Ascending aorta (tissue), 2 donors: ENCODE measurements at regions of chr1 and their contacts with region 1.

Region 1: DNA sequence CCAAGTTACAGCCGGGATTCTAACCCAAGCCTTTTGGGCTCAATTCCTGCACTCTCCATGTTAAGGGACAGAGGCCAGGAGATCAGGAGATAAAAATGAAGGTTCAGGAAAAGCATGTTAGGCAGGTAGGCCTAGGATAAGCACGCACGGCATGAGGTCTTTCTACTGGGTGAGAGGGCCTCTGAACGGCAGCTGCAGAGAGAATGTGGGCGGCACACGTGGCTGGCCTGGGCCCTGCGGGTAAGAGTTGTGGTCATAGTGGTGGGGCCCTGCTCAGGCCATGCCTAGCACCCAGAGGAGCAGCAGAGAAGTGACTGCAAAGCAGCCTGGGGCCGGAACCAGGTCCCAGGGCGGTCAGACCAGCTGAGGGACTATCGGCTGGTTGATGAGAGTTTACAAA is 7.5 kb upstream of the FOXO6 start:
- DNase-seq: peak in 1 of 2 donors; percentile 25
- H3K4me3 ChIP-seq: no peak overlapping the region
- H3K27ac ChIP-seq: no peak overlapping the region
- H3K4me1 ChIP-seq: peaks cover 0 to 6% of the 10 kb centered on the region in 2 donors
- H3K27me3 ChIP-seq: no peaks in the 10 kb centered on the region
- CTCF ChIP-seq: no peak

Region 2: GRCh38 chr1:40956407-40956806 is 397.3 kb before region 1 on chr1:
- intact Hi-C with region 1: no loop called
- DNase-seq: no peak
- H3K4me3 ChIP-seq: no peak overlapping the region
- H3K27ac ChIP-seq: no peak overlapping the region
- H3K4me1 ChIP-seq: no peaks in the 10 kb centered on the region
- H3K27me3 ChIP-seq: no peaks in the 10 kb centered on the region
- CTCF ChIP-seq: no peak

Region 3: GRCh38 chr1:41315146-41315822 is 38.4 kb before region 1 on chr1:
- intact Hi-C with region 1: loop called (anchors 5 kb)
- DNase-seq: no peak
- H3K4me3 ChIP-seq: no peak overlapping the region
- H3K27ac ChIP-seq: no peak overlapping the region
- H3K4me1 ChIP-seq: peaks cover 7 to 13% of the 10 kb centered on the region in 2 donors
- H3K27me3 ChIP-seq: no peaks in the 10 kb centered on the region
- CTCF ChIP-seq: no peak

Region 4: GRCh38 chr1:41371630-41372599 is 18.2 kb after region 1 on chr1:
- intact Hi-C with region 1: no loop called
- DNase-seq: no peak
- H3K4me3 ChIP-seq: no peak overlapping the region
- H3K27ac ChIP-seq: no peak overlapping the region
- H3K4me1 ChIP-seq: peaks cover 0 to 7% of the 10 kb centered on the region in 2 donors
- H3K27me3 ChIP-seq: no peaks in the 10 kb centered on the region
- CTCF ChIP-seq: no peak

Region 5: DNA sequence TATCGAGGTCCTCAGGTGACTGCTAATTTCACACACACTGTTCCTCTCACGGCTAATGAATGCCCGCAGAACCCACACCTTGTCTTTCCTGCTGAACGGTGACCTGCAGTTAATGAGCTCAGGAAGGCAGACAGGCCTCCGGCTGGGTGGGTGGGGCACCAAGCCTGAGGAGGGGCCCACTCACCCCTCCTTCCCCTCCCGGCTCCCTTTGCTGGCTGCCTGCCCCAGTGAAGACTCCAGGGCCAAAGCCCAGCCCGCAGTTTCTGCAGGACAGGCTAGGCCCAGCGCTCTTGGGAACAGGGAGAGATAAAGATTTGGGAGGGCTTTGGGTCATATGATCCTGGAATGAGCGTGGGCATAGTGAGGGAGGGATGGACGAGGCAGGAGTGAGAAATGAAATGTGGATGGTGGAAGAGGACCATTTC is 34.0 kb after region 1 on chr1:
- intact Hi-C with region 1: loop called (anchors 5 kb)
- DNase-seq: peak in 1 of 2 donors; percentile 85
- H3K4me3 ChIP-seq: no peak overlapping the region
- H3K27ac ChIP-seq: peak overlapping the region in 1 of 2 donors; percentile 17
- H3K4me1 ChIP-seq: peaks cover 0 to 15% of the 10 kb centered on the region in 2 donors
- H3K27me3 ChIP-seq: no peaks in the 10 kb centered on the region
- CTCF ChIP-seq: no peak